Adrenal gland (tissue), 19 donors: ENCODE measurements at regions of chr11 and their contacts with region 1.

Region 1: GRCh38 chr11:113261709-113262475 is 52.5 kb upstream of the TTC12 start:
- DNase-seq: peak; percentile 56 to 76 (median 67)
- H3K4me3 ChIP-seq: no peak overlapping the region
- H3K27ac ChIP-seq: no peak overlapping the region
- H3K4me1 ChIP-seq: peaks cover 0 to 5% of the 10 kb centered on the region in 2 donors
- H3K27me3 ChIP-seq: no peaks in the 10 kb centered on the region
- CTCF ChIP-seq: no peak
- POLR2A ChIP-seq: no peak

Region 2: GRCh38 chr11:113048820-113049768 is 212.8 kb before region 1 on chr11:
- intact Hi-C with region 1: loop called in 1 of 2 experiments (anchors 10 kb)
- DNase-seq: peak in 6 of 7 donors; percentile 52 to 74 (median 66)
- H3K4me3 ChIP-seq: no peak overlapping the region
- H3K27ac ChIP-seq: peak overlapping the region in 4 of 5 donors; percentile 66 to 89 (median 77)
- H3K4me1 ChIP-seq: peaks cover 5 to 15% of the 10 kb centered on the region in 2 donors
- H3K27me3 ChIP-seq: no peaks in the 10 kb centered on the region
- CTCF ChIP-seq: no peak
- POLR2A ChIP-seq: no peak

Region 3: DNA sequence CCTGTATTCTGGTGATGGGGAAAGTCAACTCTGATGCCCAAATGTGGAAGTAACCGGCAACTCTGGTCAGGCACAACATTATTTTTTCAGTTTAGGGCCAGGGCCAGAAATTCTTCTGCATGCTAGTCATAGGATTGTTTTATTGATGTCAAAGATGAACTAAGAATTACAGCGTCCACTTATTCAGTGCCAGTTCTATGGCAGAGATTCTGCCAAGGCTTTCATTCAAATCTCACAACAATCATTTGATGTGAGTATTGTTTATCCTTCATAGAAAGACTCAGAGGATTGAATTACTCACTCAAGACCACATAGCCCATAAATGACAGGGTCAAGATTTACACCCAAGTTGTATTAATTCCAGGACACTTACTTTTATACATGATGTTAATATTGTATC is 356.5 kb after region 1 on chr11:
- intact Hi-C with region 1: no loop called
- DNase-seq: no peak
- H3K4me3 ChIP-seq: no peak overlapping the region
- H3K27ac ChIP-seq: no peak overlapping the region
- H3K4me1 ChIP-seq: no peaks in the 10 kb centered on the region
- H3K27me3 ChIP-seq: no peaks in the 10 kb centered on the region
- CTCF ChIP-seq: no peak
- POLR2A ChIP-seq: no peak